ENCODE measurements at regions of chr2 and their contacts with region 1.

Region 1: DNA sequence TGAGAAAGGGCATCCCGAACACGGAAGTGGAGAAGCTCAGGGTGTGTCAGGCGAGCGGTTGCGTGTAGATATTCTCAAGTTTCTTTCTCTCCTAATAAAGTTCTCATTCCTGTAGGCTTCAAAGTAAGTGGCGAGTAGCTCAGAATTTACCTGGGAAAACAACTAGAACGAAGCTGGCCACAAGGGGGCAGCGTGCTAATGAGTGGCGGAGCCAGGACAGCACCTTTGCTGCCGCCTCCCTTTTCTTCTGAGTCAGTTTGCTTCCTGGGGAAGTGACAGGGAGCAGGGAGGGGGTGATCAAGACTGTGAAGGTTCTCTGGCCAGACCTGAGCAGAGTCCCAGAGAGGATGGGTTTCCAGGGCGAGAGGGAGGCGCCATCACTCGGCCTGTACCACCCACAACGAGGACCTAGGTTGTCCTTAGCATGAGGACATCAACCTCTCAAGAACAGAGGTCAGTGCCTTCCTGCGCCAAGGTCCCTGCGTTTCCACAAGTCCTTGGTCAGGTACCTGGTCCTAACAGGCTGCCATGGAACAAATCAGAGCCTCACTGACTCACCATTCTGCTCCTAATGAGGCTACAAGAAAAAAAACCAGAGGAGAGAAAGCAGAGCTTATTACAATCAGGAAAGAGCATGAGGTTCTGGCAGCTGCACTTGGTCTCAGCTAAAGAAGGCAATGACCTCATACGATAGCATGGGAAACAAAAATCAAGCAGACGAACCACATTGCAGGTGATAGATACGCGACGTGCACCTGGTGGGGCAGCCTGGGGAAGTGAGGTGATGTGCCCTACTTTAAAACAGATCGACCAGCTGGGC is 98.6 kb downstream of the PLB1 start:
- DNase-seq: peak; percentile 82 to 93 (median 89)
- H3K4me3 ChIP-seq: peak overlapping the region in 1 of 3 experiments; percentile 45
- H3K4me3 Mint-ChIP-seq: peak overlapping the region; percentile 60 to 77
- H3K27ac ChIP-seq: peak overlapping the region in 1 of 2 donors; percentile 62
- H3K27ac Mint-ChIP-seq: peak overlapping the region; percentile 71 to 93 (median 87)
- H3K4me1 ChIP-seq: peaks cover 14 to 16% of the 10 kb centered on the region in 2 donors
- H3K4me1 Mint-ChIP-seq: peaks cover 16% of the 10 kb centered on the region
- H3K27me3 ChIP-seq: no peaks in the 10 kb centered on the region
- H3K27me3 Mint-ChIP-seq: peaks cover 0 to 6% (median 2%) of the 10 kb centered on the region in 3 donors
- CTCF ChIP-seq: peak; percentile 91

Region 2: DNA sequence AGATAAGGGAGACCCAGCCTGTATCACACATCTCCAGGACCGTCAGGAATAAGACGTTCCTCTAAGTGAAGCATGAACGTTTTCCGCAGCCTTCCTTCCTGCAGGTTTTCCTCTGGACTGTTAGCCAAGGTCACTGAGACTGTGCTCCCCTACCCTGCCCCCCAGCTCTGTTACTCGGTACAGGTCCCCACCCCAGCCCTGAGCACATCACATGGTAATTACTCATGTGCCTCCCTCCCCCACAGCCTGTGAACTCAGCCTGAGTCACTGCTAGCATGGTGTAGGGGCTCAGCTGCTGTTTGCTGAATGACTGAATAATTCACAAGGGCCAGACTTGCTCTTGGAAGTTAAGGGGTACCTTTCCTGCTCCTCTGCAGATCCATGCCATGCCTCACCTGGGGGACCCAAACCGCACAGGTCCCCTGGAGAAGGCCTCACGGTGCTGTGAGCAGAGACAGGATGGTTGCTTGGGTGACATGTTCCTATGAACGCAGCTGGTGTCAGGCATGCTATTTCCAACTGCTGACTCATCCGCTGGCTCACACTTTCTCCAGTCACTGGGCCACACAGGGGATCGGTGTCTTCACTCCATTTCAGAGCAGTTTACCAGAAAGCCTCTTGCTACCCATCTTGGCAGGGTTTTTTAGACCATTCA is 10.5 kb before region 1 on chr2:
- intact Hi-C with region 1: no loop called
- DNase-seq: peak; percentile 77 to 91 (median 82)
- H3K4me3 ChIP-seq: no peak overlapping the region
- H3K4me3 Mint-ChIP-seq: no peak overlapping the region
- H3K27ac ChIP-seq: peak overlapping the region; percentile 31 to 81
- H3K27ac Mint-ChIP-seq: peak overlapping the region; percentile 76 to 96 (median 90)
- H3K4me1 ChIP-seq: peaks cover 25 to 34% of the 10 kb centered on the region in 2 donors
- H3K4me1 Mint-ChIP-seq: peaks cover 31% of the 10 kb centered on the region
- H3K27me3 ChIP-seq: no peaks in the 10 kb centered on the region
- H3K27me3 Mint-ChIP-seq: no peaks in the 10 kb centered on the region
- CTCF ChIP-seq: no peak

Region 3: DNA sequence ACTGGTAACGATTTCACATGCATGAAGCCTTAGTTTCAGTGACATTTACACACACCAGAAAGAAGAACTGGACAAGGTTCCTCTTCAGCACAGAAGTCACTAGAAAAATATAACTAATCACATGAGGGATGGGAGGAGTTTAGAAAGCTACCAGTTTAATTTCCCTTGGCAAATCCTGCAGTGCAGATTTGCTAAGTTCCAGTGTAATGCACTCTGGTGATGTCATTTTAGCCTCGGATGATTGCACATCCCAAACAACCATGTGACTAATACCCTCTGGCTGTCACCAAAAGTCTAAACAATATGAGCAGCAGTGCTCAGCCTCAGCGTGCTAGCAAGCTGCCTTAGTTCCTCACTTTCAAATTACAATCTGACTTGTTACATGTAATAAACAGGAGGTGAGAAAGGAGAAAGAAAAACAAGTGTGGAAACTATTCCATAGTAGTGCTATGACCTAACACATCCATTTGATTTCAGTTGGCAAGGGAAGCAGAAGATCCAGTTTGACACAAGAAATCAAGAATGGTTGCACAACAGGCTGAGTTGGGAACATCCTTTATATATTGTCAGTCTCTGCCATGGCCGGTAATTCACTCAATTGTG is 121.9 kb after region 1 on chr2:
- intact Hi-C with region 1: loop called in 1 of 2 experiments (anchors 2 kb)
- DNase-seq: peak; percentile 97 to 99 (median 98)
- H3K4me3 ChIP-seq: peak overlapping the region in 1 of 3 experiments; percentile 50
- H3K4me3 Mint-ChIP-seq: peak overlapping the region in 1 of 2 donors; percentile 75
- H3K27ac ChIP-seq: peak overlapping the region; percentile 95 to 99
- H3K27ac Mint-ChIP-seq: peak overlapping the region; percentile 99 to 100 (median 99)
- H3K4me1 ChIP-seq: peaks cover 53 to 54% of the 10 kb centered on the region in 2 donors
- H3K4me1 Mint-ChIP-seq: peaks cover 49% of the 10 kb centered on the region
- H3K27me3 ChIP-seq: no peaks in the 10 kb centered on the region
- H3K27me3 Mint-ChIP-seq: peaks cover 0 to 4% (median 1%) of the 10 kb centered on the region in 3 donors
- CTCF ChIP-seq: no peak